PC-9 (cell line): ENCODE measurements at regions of chr11 and their contacts with region 1.

Region 1: GRCh38 chr11:67998150-67999045 is 5.5 kb downstream of the UNC93B1 start:
- DNase-seq: no peak
- H3K4me3 ChIP-seq: no peak overlapping the region
- H3K27ac ChIP-seq: no peak overlapping the region
- H3K4me1 ChIP-seq: no peaks in the 10 kb centered on the region
- H3K27me3 ChIP-seq: no peaks in the 10 kb centered on the region
- CTCF ChIP-seq: no peak

Region 2: DNA sequence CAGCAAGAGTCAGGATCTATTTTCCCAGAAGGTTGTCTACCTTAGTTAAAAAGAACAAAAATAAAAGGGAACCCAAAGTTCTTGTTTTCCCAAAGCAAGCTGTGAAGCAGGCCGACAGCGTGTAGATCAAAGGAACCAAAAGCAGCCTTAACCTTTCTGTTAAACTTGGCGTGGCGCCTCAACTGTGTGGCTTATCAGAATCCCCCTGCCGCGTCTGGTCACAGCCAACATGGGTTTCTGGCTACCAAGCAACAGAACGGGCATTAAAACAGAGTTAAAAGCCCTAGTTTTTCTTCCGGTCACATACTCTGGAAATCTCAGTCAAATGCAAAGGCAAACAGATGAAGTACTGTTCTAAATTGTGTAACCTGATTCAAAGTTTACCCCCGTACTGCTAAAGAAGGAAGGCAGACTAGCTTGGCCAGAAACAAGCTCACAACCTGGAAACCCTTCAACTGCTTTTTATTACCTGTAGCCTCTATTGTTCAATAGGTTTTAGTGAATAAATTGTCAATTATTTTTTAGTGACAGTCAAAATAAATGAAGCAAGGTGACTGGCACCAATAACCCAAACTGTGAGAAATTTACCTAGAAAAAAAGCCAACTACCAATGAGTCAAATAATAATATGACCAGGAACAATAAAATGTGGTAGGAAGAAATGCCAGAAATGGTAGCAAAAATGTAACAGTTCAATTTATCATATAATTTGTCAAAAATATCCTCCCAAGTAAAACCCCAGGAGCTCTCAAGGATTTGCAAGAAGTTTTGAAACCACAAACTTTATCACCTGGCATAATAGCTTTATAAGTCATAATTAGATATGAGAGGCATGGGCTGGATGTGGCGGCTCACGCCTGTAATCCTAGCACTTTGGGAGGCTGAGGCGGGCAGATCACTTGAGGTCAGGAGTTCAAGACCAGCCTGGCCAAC is 101.3 kb after region 1 on chr11:
- CTCF ChIA-PET with region 1: interaction called, 13 read pairs
- POLR2A ChIA-PET with region 1: no interaction called
- intact Hi-C with region 1: no loop called
- DNase-seq: no peak
- H3K4me3 ChIP-seq: no peak overlapping the region
- H3K27ac ChIP-seq: peak overlapping the region; percentile 39
- H3K4me1 ChIP-seq: peaks cover 18% of the 10 kb centered on the region
- H3K27me3 ChIP-seq: no peaks in the 10 kb centered on the region
- CTCF ChIP-seq: no peak

Region 3: GRCh38 chr11:68279676-68280075 is 281.3 kb after region 1 on chr11:
- CTCF ChIA-PET with region 1: no interaction called
- POLR2A ChIA-PET with region 1: no interaction called
- intact Hi-C with region 1: no loop called
- DNase-seq: no peak
- H3K4me3 ChIP-seq: no peak overlapping the region
- H3K27ac ChIP-seq: no peak overlapping the region
- H3K4me1 ChIP-seq: no peaks in the 10 kb centered on the region
- H3K27me3 ChIP-seq: no peaks in the 10 kb centered on the region; the same call in 1 of the 2 replicates
- CTCF ChIP-seq: no peak